AG04450 (cell line): ENCODE measurements at regions of chr18 and their contacts with region 1.

Region 1: GRCh38 chr18:45879681-45880655 is 54.5 kb downstream of the SIGLEC15 start:
- DNase-seq: peak; percentile 38
- H3K4me3 ChIP-seq: no peak overlapping the region
- H3K27ac ChIP-seq: no peak overlapping the region
- H3K27me3 ChIP-seq: no peaks in the 10 kb centered on the region
- CTCF ChIP-seq: peak; percentile 99

Region 2: GRCh38 chr18:45690975-45691815 is 188.8 kb before region 1 on chr18:
- CTCF ChIA-PET with region 1: interaction called, 110 read pairs
- POLR2A ChIA-PET with region 1: no interaction called
- DNase-seq: peak; percentile 60
- H3K4me3 ChIP-seq: no peak overlapping the region
- H3K27ac ChIP-seq: no peak overlapping the region
- H3K27me3 ChIP-seq: no peaks in the 10 kb centered on the region
- CTCF ChIP-seq: peak; percentile 84

Region 3: GRCh38 chr18:45863469-45863868 is 16.5 kb before region 1 on chr18:
- CTCF ChIA-PET with region 1: interaction called, 70 read pairs
- POLR2A ChIA-PET with region 1: no interaction called
- DNase-seq: no peak
- H3K4me3 ChIP-seq: no peak overlapping the region
- H3K27ac ChIP-seq: no peak overlapping the region
- H3K27me3 ChIP-seq: no peaks in the 10 kb centered on the region
- CTCF ChIP-seq: no peak

Region 4: DNA sequence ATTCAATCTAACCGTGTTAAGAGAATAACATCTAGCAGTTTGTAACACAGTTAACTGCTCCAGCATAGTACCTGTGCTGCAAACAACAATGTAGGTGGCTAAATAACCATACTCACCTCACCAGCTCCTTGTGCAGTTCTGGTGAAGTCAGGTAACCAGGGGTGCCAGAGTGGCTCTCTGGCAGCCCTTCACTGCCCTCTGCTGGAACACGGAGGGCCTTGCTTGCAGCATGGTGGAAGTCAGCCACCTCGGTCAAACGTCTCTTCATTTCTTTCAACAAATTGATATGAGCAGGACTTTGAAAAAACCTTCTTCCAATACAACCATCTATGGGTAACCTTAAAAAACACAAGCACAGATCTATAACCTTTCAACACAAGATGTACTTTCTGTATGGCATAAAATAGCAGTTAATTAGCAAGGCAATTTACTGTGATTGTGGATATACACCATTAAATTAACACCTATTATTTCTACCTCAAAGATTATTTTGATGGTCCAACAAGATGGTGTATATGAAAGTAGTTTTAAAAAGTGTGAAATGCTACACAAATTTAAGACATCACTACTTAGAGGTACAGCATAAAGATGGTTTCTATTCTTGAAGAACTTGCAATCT is 30.5 kb after region 1 on chr18:
- CTCF ChIA-PET with region 1: interaction called, 35 read pairs
- POLR2A ChIA-PET with region 1: interaction called, 3 read pairs
- DNase-seq: peak; percentile 13
- H3K4me3 ChIP-seq: no peak overlapping the region
- H3K27ac ChIP-seq: no peak overlapping the region
- H3K27me3 ChIP-seq: no peaks in the 10 kb centered on the region
- CTCF ChIP-seq: peak; percentile 85